ENCODE measurements at regions of chr7 and their contacts with region 1.

Region 1: DNA sequence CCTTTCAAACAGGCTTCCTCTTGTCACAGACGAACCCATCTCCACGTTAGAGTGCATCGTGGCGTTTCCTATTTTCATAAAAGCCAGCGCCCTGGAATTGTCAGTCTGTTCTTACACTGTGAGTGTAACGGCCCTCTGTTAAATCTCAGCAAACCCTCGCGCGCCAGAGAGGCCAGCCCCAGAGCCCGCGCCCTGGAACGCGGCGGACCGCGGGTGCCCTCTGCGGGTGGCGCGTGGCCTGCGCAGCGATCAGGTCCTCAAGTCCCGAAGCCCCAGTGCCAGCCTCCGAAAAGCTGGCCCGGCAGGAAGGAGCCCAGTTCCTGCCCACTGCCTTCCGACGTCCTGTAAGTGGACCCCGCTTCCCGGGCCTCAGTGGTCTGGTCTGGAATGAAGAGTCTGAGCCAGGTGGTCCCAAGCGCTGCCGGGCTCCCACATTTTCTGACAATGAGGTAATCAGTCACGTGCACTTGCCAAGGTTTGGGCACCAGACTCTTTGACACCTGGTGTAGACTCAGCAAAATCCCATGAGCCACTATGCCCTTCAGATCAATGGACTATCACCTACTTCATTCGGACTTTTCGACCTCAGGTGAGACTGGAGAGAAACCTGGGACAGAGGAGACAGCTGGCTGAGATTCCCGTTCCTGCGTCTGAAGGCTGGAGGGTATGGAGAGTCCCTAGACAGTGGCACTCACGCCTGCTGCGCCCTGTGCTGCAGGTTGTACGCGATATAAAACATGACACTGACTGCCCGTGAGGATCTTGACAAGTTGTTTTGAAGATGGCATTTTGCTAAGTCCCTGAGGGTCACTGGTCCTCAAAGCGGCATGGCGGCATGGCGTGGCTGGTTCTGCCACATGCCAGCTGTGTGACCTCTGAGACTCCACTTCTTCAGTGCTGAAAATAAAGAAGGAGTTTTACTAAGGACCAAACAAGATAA is 109.4 kb upstream of the LANCL2 start:
- DNase-seq: peak in 1 of 2 donors; percentile 92
- H3K4me3 ChIP-seq: peak overlapping the region; percentile 71 to 74
- H3K27ac ChIP-seq: peak overlapping the region; percentile 6 to 23
- H3K4me1 ChIP-seq: peaks cover 0 to 7% of the 10 kb centered on the region in 2 donors
- H3K27me3 ChIP-seq: no peaks in the 10 kb centered on the region
- CTCF ChIP-seq: peak; percentile 88 to 96 (median 96)

Region 2: GRCh38 chr7:54773472-54774399 is 482.0 kb before region 1 on chr7:
- intact Hi-C with region 1: loop called (anchors 1 kb)
- DNase-seq: peak in 1 of 2 donors; percentile 88
- H3K4me3 ChIP-seq: peak overlapping the region; percentile 41 to 57
- H3K27ac ChIP-seq: no peak overlapping the region
- H3K4me1 ChIP-seq: peaks cover 0 to 3% of the 10 kb centered on the region in 2 donors
- H3K27me3 ChIP-seq: no peaks in the 10 kb centered on the region
- CTCF ChIP-seq: peak; percentile 72 to 87 (median 83)

Region 3: GRCh38 chr7:54788664-54789063 is 467.1 kb before region 1 on chr7:
- intact Hi-C with region 1: loop called (anchors 1 kb)
- DNase-seq: no peak
- H3K4me3 ChIP-seq: no peak overlapping the region
- H3K27ac ChIP-seq: no peak overlapping the region
- H3K4me1 ChIP-seq: no peaks in the 10 kb centered on the region
- H3K27me3 ChIP-seq: no peaks in the 10 kb centered on the region
- CTCF ChIP-seq: peak; percentile 55 to 82 (median 66)

Region 4: GRCh38 chr7:54839538-54840213 is 416.1 kb before region 1 on chr7:
- intact Hi-C with region 1: loop called (anchors 1 kb)
- DNase-seq: peak in 1 of 2 donors; percentile 84
- H3K4me3 ChIP-seq: no peak overlapping the region
- H3K27ac ChIP-seq: no peak overlapping the region
- H3K4me1 ChIP-seq: peaks cover 0 to 30% of the 10 kb centered on the region in 2 donors
- H3K27me3 ChIP-seq: no peaks in the 10 kb centered on the region
- CTCF ChIP-seq: peak; percentile 56 to 70 (median 68)

Region 5: GRCh38 chr7:54932818-54933543 is 322.8 kb before region 1 on chr7:
- intact Hi-C with region 1: loop called (anchors 10 kb)
- DNase-seq: peak in 1 of 2 donors; percentile 78
- H3K4me3 ChIP-seq: peak overlapping the region; percentile 40 to 63
- H3K27ac ChIP-seq: peak overlapping the region in 1 of 2 donors; percentile 47
- H3K4me1 ChIP-seq: peaks cover 0 to 3% of the 10 kb centered on the region in 2 donors
- H3K27me3 ChIP-seq: no peaks in the 10 kb centered on the region
- CTCF ChIP-seq: no peak

Region 6: GRCh38 chr7:55018361-55019190 is 237.2 kb before region 1 on chr7 and contains the start of gene EGFR:
- intact Hi-C with region 1: loop called (anchors 2 kb)
- DNase-seq: peak; percentile 29 to 91
- H3K4me3 ChIP-seq: peak within 1 kb of the TSS; percentile 88 to 98
- H3K27ac ChIP-seq: peak within 1 kb of the TSS; percentile 97 to 98
- H3K4me1 ChIP-seq: peaks cover 4 to 38% of the 10 kb centered on the region in 2 donors
- H3K27me3 ChIP-seq: no peaks in the 10 kb centered on the region
- CTCF ChIP-seq: no peak
- total RNA-seq, gene EGFR: 33.8 TPM

Region 7: DNA sequence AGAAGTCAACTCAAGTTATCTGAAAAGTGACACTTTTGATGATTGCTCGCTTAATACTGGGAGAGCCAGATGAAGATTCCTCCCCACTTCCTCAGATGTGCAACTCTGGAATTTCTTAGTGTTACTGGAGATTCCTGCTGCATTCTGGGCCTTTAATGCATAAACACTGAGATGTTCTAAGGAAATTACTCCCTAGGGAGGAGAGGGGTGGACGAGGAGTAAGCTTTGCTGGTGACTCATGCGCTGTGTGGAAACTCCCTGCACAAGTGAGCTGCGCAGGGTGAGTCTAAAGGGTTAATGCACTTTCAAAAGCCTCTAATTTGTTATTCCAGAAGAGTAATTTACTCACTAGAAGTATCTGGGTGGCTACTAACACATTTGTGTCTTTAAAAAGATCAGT is 190.7 kb before region 1 on chr7:
- intact Hi-C with region 1: loop called (anchors 10 kb)
- DNase-seq: no peak
- H3K4me3 ChIP-seq: peak overlapping the region in 1 of 2 donors; percentile 9
- H3K27ac ChIP-seq: peak overlapping the region; percentile 73 to 77
- H3K4me1 ChIP-seq: peaks cover 4 to 38% of the 10 kb centered on the region in 2 donors
- H3K27me3 ChIP-seq: no peaks in the 10 kb centered on the region
- CTCF ChIP-seq: no peak

Measured in ascending aorta (tissue), 2 donors.